Activated CD8-positive, alpha-beta T cell treated with anti-CD3 and anti-CD28 coated beads for 36 hours (primary cell): ENCODE measurements at regions of chr4 and their contacts with region 1.

Region 1: DNA sequence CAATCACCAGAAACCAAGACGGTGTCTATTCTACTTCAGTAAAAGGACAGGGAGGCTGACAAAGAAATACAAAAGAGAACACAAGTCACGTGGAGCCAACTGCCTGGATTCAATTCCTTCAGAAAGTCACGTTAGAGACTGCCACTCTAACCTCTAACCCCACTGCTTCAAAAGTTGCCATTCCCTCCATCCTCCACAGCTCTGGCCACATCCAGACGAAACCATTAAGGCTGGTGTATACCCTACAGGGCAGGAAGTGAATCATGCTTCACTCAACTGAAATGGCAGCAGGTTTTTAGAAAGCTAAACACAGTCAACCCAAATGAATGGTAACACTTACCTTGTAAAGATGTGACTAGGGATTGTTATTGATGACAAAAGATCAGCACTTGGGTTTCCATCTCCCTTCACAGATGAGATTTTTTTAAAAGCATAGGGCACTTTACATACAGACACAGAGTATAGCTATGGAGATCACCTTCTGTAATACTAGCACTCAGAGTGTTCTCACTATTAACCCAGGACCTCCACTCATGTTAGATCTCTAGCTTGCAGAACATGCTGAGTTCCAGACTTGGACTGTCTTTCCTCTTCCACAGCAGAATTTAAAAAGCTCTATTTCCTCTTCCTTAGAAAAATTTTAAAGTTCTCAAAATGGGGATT is 37.4 kb downstream of the MAML3 start:
- DNase-seq: peak; percentile 67
- ATAC-seq: peak; percentile 98
- H3K4me3 Mint-ChIP-seq: peak overlapping the region; percentile 19
- H3K27ac Mint-ChIP-seq: peak overlapping the region; percentile 79
- H3K4me1 Mint-ChIP-seq: peaks cover 39% of the 10 kb centered on the region
- H3K27me3 Mint-ChIP-seq: no peaks in the 10 kb centered on the region
- CTCF ChIP-seq: no peak

Region 2: DNA sequence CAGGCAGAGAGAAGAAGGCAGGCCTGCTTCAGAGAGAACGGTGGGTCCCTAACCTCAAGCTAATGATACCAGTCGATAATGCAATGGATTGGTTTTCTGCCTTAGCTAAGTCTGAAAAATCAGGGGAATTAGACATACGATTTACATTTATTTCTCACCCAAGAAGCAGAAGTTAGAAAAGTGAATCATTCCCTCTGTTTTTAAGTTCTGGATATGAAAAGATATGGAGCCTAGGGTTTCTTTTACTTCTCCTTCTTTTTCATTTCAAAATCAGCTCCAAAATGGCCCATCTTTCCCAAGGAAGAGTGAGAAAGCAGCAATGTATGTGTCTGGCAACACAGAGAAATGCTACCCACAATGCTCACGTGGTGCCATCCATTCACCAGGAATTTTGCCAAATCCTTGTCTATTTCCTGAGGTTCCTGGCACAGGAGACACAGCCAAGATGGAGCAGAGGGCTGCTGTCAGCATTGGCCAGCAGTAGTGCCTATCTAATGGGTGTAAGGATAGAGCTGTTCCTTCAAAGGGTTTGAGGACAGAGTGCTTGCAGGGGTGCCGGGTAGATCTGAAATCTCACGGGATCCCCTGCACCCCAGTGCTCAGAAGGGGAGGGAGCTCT is 194.1 kb before region 1 on chr4:
- CTCF ChIA-PET with region 1: no interaction called
- POLR2A ChIA-PET with region 1: no interaction called
- intact Hi-C with region 1: no loop called
- DNase-seq: no peak
- ATAC-seq: no peak
- H3K4me3 Mint-ChIP-seq: no peak overlapping the region
- H3K27ac Mint-ChIP-seq: no peak overlapping the region
- H3K4me1 Mint-ChIP-seq: no peaks in the 10 kb centered on the region
- H3K27me3 Mint-ChIP-seq: no peaks in the 10 kb centered on the region
- CTCF ChIP-seq: no peak

Region 3: GRCh38 chr4:140071806-140072205 is 44.8 kb before region 1 on chr4:
- CTCF ChIA-PET with region 1: no interaction called
- POLR2A ChIA-PET with region 1: no interaction called
- intact Hi-C with region 1: loop called (anchors 5 kb)
- DNase-seq: peak; percentile 94
- ATAC-seq: peak; percentile 83
- H3K4me3 Mint-ChIP-seq: peak overlapping the region; percentile 63
- H3K27ac Mint-ChIP-seq: peak overlapping the region; percentile 79
- H3K4me1 Mint-ChIP-seq: peaks cover 44% of the 10 kb centered on the region
- H3K27me3 Mint-ChIP-seq: peaks cover 23% of the 10 kb centered on the region
- CTCF ChIP-seq: no peak